Prostate gland (tissue), 2 donors: ENCODE measurements at regions of chr13 and their contacts with region 1.

Region 1: DNA sequence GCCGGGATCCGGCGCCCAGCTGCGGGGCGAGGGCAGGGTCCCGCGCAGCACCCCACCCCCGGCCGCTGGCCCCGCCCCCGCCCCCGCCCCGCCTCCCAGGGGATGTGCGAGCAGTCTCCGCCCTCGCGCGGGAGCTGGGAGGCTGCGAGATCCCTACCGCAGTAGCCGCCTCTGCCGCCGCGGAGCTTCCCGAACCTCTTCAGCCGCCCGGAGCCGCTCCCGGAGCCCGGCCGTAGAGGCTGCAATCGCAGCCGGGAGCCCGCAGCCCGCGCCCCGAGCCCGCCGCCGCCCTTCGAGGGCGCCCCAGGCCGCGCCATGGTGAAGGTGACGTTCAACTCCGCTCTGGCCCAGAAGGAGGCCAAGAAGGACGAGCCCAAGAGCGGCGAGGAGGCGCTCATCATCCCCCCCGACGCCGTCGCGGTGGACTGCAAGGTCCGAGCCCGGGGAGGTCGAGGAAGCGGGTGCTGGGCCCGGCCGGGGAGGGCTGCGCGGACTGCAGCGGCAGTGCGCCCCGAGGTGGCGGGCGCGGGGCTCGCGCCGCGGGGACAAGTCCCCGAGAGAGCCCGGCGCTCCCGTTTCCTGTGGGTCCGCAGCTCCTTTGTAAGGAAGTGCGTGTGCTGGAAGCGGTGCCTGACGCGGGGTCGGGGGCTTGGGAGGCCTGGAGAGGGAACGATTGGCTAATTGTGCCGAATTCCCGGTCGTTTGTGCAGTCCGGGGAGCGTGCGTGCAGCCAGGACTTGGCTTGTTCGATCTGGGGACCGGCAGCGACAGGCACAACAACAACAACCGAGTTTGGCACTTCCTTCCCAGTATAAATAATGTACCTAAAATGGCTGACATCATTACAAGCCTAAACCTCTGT is at the start of gene ITM2B:
- DNase-seq: peak; percentile 81
- H3K4me3 ChIP-seq: peak within 1 kb of the TSS; percentile 97 to 100
- H3K27ac ChIP-seq: peak within 1 kb of the TSS; percentile 100
- H3K4me1 ChIP-seq: peaks cover 6% of the 10 kb centered on the region
- H3K27me3 ChIP-seq: no peaks in the 10 kb centered on the region
- CTCF ChIP-seq: peak in 3 of 4 experiments; percentile 8 to 53 (median 41)
- POLR2A ChIP-seq: peak; percentile 87
- total RNA-seq, gene ITM2B: 401 to 632 TPM

Region 2: GRCh38 chr13:48037346-48038173 is 195.7 kb before region 1 on chr13 and contains the start of gene NUDT15:
- intact Hi-C with region 1: loop called (anchors 5 kb)
- DNase-seq: peak; percentile 92
- H3K4me3 ChIP-seq: peak within 1 kb of the TSS; percentile 62 to 63
- H3K27ac ChIP-seq: peak within 1 kb of the TSS; percentile 96
- H3K4me1 ChIP-seq: no peaks in the 10 kb centered on the region
- H3K27me3 ChIP-seq: no peaks in the 10 kb centered on the region
- CTCF ChIP-seq: peak; percentile 97 to 98 (median 97)
- POLR2A ChIP-seq: peak; percentile 75
- total RNA-seq, gene NUDT15: 11.7 to 26.9 TPM

Region 3: DNA sequence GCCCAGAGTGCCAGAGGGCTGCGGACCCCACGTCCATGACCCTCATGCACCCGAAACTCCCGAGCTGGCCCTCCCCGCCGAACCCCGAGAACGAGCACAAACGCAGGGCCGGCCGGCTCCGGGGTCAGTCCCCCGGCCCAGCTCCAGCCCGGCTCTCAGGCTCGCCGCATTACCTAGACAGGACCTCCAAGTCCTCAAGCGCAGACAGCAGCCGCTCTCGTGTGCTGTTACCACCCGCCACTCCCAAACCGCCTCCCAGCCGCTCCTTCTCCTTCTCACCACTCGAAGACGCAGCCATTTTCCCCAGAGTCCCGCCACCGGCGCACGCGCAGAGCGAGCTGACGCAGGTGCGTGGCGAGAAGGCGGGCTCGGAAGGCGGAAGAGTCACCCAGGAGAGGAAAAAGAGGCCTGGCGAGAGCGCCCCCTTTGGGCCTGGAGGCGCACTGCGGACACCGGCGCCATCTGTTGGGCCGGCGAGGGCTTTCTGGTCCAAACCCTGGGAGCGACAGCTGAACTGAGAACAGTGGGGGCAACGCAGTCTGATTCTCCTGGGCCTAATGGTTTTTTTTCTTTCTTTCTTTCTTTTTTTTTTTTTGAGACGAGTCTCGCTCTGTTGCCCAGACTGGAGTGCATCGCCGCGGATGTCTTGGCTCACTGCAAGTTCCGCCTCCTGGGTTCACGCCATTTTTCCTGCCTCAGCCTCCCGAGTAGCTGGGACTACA is 138.3 kb before region 1 on chr13 and contains the start of gene MED4:
- intact Hi-C with region 1: loop called (anchors 10 kb)
- DNase-seq: peak; percentile 91
- H3K4me3 ChIP-seq: peak within 1 kb of the TSS; percentile 96 to 97
- H3K27ac ChIP-seq: peak within 1 kb of the TSS; percentile 77 to 83
- H3K4me1 ChIP-seq: no peaks in the 10 kb centered on the region
- H3K27me3 ChIP-seq: no peaks in the 10 kb centered on the region
- CTCF ChIP-seq: peak; percentile 97 to 99 (median 99)
- POLR2A ChIP-seq: peak; percentile 70
- total RNA-seq, gene MED4: 33.9 to 36.4 TPM

Region 4: GRCh38 chr13:48126944-48127830 is 106.1 kb before region 1 on chr13:
- intact Hi-C with region 1: loop called (anchors 5 kb)
- DNase-seq: peak; percentile 23
- H3K4me3 ChIP-seq: no peak overlapping the region
- H3K27ac ChIP-seq: peak overlapping the region; percentile 24 to 59
- H3K4me1 ChIP-seq: peaks cover 14% of the 10 kb centered on the region
- H3K27me3 ChIP-seq: no peaks in the 10 kb centered on the region
- CTCF ChIP-seq: peak; percentile 50 to 83 (median 80)
- POLR2A ChIP-seq: no peak

Region 5: DNA sequence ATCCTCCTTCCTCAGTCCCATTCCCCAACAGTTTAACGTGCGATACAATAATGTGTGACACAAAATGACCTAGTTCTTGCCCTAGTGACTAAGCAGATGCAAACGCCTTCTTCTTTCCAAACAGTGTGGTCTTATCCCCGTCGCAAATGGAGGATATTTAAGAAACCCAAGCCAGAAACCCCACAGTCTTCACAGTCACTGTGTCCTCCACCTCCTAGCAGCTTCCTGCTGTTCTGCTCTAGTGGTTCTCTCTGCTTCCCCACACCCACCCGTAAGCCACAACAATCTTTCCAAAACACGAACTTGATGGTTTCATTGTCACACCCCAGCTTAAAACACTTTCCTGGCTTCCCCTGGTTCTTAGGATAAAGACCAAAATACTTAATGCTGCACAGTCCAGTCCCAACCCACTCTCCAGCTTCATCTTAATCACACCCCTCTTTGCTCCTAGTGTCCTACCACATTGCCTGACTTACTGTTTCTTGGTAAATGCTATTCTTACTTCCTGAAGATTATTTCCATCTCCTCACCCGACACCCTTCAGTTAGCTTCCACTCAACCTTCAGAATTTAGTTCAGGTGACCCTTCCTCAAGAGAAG is 32.0 kb after region 1 on chr13:
- intact Hi-C with region 1: no loop called
- DNase-seq: no peak
- H3K4me3 ChIP-seq: no peak overlapping the region
- H3K27ac ChIP-seq: no peak overlapping the region
- H3K4me1 ChIP-seq: no peaks in the 10 kb centered on the region
- H3K27me3 ChIP-seq: no peaks in the 10 kb centered on the region
- CTCF ChIP-seq: no peak
- POLR2A ChIP-seq: no peak

Region 6: GRCh38 chr13:48303359-48304142 is 70.3 kb after region 1 on chr13 and contains the start of gene RB1:
- intact Hi-C with region 1: loop called (anchors 2 kb)
- DNase-seq: peak; percentile 87
- H3K4me3 ChIP-seq: peak within 1 kb of the TSS; percentile 86 to 96
- H3K27ac ChIP-seq: peak within 1 kb of the TSS; percentile 97 to 99
- H3K4me1 ChIP-seq: no peaks in the 10 kb centered on the region
- H3K27me3 ChIP-seq: no peaks in the 10 kb centered on the region
- CTCF ChIP-seq: peak in 1 of 4 experiments; percentile 16
- POLR2A ChIP-seq: peak; percentile 95
- total RNA-seq, gene RB1: 42.1 to 43.7 TPM

Region 7: DNA sequence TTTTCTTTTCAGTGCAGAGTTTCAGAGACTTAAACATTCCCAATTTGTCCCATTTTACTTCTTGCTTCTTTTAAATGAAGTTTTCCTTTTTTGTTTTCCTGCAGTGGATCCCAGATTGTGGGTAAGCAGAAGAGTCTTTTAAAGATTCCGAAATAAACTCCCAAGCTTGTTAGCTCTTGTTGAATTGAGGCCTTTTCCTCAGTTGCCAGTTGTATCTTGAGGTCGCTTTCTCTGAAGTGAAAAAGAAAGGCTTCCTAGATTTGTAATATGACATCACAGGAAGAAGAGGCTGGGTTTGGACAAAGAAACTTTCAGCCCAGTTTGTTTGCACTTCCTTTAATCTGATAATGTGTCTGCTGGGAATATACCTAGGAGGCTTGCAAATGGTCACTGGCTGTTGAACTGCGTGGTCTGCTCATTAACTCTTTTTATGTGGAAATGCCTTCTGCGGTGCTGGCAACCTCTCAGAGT is 179.6 kb after region 1 on chr13 and contains the start of gene LPAR6:
- intact Hi-C with region 1: loop called (anchors 10 kb)
- DNase-seq: peak; percentile 74
- H3K4me3 ChIP-seq: peak within 1 kb of the TSS; percentile 35 to 54
- H3K27ac ChIP-seq: peak within 1 kb of the TSS; percentile 83 to 86
- H3K4me1 ChIP-seq: no peaks in the 10 kb centered on the region
- H3K27me3 ChIP-seq: no peaks in the 10 kb centered on the region
- CTCF ChIP-seq: no peak
- POLR2A ChIP-seq: peak; percentile 86
- total RNA-seq, gene LPAR6: 17.3 to 66.5 TPM

Region 8: GRCh38 chr13:48580185-48580803 is 347.0 kb after region 1 on chr13:
- intact Hi-C with region 1: loop called (anchors 10 kb)
- DNase-seq: peak; percentile 79
- H3K4me3 ChIP-seq: no peak overlapping the region
- H3K27ac ChIP-seq: peak overlapping the region in 1 of 2 donors; percentile 63
- H3K4me1 ChIP-seq: peaks cover 3% of the 10 kb centered on the region
- H3K27me3 ChIP-seq: no peaks in the 10 kb centered on the region
- CTCF ChIP-seq: peak; percentile 40 to 84 (median 74)
- POLR2A ChIP-seq: no peak